Mammary epithelial cell (primary cell): ENCODE measurements at regions of chr11 and their contacts with region 1.

Region 1: GRCh38 chr11:44565211-44565952 is at the start of gene CD82:
- DNase-seq: peak; percentile 98
- H3K4me3 ChIP-seq: peak within 1 kb of the TSS; percentile 40 to 83 (median 69)
- H3K27ac ChIP-seq: peak within 1 kb of the TSS; percentile 95
- H3K4me1 ChIP-seq: peaks cover 83% of the 10 kb centered on the region
- H3K27me3 ChIP-seq: no peaks in the 10 kb centered on the region
- CTCF ChIP-seq: peak in 1 of 2 donors; percentile 35
- total RNA-seq, gene CD82: 38.8 to 309 TPM

Region 2: DNA sequence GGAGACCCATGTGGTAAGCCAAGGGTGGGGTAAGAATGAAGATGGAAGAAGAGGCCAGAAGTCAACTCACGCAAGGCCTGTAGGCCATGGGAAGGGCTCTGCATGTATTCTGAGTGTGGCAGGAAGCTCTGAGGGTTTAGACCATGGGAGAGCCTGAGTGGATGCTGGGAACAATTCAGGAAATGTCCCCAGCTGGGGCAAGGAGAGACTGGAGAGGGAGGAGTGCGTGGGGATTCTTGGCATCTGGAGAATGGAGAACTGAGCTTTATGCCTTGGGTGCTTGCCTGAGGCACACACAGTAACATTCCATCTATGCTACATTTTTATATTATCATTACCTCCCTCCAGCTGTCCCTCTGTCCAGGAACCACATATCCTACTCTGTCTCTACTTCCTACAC is 50.3 kb before region 1 on chr11:
- CTCF ChIA-PET with region 1: no interaction called
- dilution Hi-C with region 1: no loop called
- in situ Hi-C with region 1: no loop called
- intact Hi-C with region 1: no loop called
- DNase-seq: no peak
- H3K4me3 ChIP-seq: no peak overlapping the region
- H3K27ac ChIP-seq: no peak overlapping the region
- H3K4me1 ChIP-seq: no peaks in the 10 kb centered on the region
- H3K27me3 ChIP-seq: peaks cover 2% of the 10 kb centered on the region
- CTCF ChIP-seq: no peak

Region 3: GRCh38 chr11:44589301-44589700 is 23.9 kb after region 1 on chr11:
- CTCF ChIA-PET with region 1: no interaction called
- dilution Hi-C with region 1: no loop called
- in situ Hi-C with region 1: no loop called
- intact Hi-C with region 1: loop called (anchors 2 kb)
- DNase-seq: no peak
- H3K4me3 ChIP-seq: no peak overlapping the region
- H3K27ac ChIP-seq: no peak overlapping the region
- H3K4me1 ChIP-seq: peaks cover 9% of the 10 kb centered on the region
- H3K27me3 ChIP-seq: no peaks in the 10 kb centered on the region
- CTCF ChIP-seq: no peak

Region 4: GRCh38 chr11:44611687-44612434 is 46.5 kb after region 1 on chr11:
- CTCF ChIA-PET with region 1: interaction called, 8 read pairs
- dilution Hi-C with region 1: no loop called
- in situ Hi-C with region 1: loop called (anchors 5 kb)
- intact Hi-C with region 1: no loop called
- DNase-seq: peak; percentile 21
- H3K4me3 ChIP-seq: no peak overlapping the region
- H3K27ac ChIP-seq: no peak overlapping the region
- H3K4me1 ChIP-seq: no peaks in the 10 kb centered on the region
- H3K27me3 ChIP-seq: no peaks in the 10 kb centered on the region
- CTCF ChIP-seq: no peak

Region 5: DNA sequence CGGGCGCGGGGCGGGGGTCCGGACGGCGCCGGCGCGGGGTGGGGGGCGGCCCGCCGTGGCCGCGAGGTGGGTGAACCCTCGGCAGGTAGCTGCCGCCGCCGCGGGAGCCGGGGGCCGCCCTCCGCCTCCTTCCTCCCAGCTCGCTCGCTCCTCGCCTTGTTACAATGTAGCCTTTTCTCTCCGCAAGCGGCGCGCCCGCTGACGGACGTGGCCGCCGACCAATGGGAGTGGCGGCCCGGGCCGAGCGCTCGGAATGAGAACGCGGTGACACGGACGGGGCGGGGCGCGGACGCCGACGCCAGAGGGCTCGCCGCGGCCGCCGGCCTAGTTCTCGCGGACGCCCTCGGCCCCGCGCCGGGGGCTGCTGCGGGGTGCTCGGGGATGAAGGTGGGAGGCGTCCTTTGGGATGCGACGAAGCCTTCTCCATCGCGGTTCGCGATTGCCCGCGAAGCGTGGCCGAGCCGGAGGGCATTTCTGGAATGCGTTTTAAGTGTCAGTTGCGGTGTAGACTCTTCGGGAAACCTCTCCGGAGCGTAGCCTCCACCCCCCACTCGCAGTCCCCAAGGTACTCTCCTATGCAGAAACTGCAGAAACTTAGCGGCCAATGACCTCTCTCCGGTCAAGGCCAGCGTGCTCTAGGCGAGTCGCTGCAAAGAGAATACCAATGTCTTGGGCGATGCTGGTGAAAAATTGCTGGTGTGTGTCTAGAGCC is 581.8 kb after region 1 on chr11:
- CTCF ChIA-PET with region 1: interaction called, 18 read pairs
- dilution Hi-C with region 1: no loop called
- in situ Hi-C with region 1: no loop called
- intact Hi-C with region 1: no loop called
- DNase-seq: peak; percentile 97
- H3K4me3 ChIP-seq: peak overlapping the region; percentile 40 to 69 (median 63)
- H3K27ac ChIP-seq: peak overlapping the region; percentile 48
- H3K4me1 ChIP-seq: peaks cover 10% of the 10 kb centered on the region
- H3K27me3 ChIP-seq: no peaks in the 10 kb centered on the region
- CTCF ChIP-seq: no peak